ENCODE measurements at regions of chr1 and their contacts with region 1.

Region 1: GRCh38 chr1:94237291-94238226 is at the start of gene ARHGAP29:
- H3K4me3 ChIP-seq: peak within 1 kb of the TSS; percentile 92
- H3K27ac ChIP-seq: peak within 1 kb of the TSS; percentile 81
- H3K4me1 ChIP-seq: peaks cover 9% of the 10 kb centered on the region
- CTCF ChIP-seq: peak; percentile 80; the same call in 1 of the 2 replicates

Region 2: DNA sequence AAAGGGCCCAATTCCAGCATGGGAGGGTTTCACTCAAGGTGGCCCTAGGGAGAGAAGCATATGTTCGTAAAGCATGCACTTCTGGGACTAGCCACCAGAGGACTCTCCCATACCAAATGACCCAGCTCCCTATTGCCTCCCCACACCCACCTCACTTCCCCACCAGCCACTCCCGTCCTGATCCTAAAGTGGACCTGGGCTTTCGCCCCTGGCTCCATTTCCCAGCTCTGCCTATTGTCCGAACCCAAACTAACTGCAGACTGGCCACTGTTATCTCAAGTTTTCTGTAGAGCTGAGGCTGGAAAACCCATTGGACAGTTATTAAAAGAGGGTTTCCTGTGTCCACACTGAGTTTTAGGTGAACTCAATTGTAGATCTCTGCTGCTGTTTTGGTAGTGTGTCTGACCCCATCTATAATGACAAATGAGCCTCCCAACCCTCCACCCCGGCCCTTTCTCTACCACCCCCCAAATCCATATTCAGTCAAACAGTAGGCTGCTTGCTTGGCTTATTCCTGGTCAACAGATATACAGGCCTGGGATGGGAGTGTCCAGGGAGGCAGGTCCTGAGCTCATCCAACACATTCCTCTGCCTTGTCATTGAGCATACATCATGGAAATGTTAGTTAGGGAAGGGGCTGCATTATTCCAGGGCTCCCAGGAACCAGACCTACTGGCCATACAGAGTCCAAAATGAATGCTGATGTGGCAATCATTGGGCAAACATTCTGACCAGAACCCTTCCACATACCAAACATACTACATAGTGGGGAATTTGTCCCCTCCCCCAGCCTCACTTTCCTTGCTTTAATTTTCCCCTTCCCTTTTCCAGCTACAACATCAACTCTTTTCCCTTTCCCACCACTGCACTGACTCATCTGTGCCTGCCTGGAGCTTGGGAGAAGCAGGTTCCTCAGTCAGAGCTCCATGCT is 175.8 kb before region 1 on chr1:
- CTCF ChIA-PET with region 1: interaction called, 30 read pairs
- POLR2A ChIA-PET with region 1: interaction called, 9 read pairs
- H3K4me3 ChIP-seq: no peak overlapping the region
- H3K27ac ChIP-seq: no peak overlapping the region
- H3K4me1 ChIP-seq: no peaks in the 10 kb centered on the region
- CTCF ChIP-seq: peak; percentile 88

Region 3: GRCh38 chr1:94068999-94069918 is 168.3 kb before region 1 on chr1:
- CTCF ChIA-PET with region 1: interaction called, 30 read pairs
- POLR2A ChIA-PET with region 1: interaction called, 10 read pairs
- H3K4me3 ChIP-seq: no peak overlapping the region
- H3K27ac ChIP-seq: peak overlapping the region; percentile 37
- H3K4me1 ChIP-seq: peaks cover 17% of the 10 kb centered on the region
- CTCF ChIP-seq: no peak

Region 4: DNA sequence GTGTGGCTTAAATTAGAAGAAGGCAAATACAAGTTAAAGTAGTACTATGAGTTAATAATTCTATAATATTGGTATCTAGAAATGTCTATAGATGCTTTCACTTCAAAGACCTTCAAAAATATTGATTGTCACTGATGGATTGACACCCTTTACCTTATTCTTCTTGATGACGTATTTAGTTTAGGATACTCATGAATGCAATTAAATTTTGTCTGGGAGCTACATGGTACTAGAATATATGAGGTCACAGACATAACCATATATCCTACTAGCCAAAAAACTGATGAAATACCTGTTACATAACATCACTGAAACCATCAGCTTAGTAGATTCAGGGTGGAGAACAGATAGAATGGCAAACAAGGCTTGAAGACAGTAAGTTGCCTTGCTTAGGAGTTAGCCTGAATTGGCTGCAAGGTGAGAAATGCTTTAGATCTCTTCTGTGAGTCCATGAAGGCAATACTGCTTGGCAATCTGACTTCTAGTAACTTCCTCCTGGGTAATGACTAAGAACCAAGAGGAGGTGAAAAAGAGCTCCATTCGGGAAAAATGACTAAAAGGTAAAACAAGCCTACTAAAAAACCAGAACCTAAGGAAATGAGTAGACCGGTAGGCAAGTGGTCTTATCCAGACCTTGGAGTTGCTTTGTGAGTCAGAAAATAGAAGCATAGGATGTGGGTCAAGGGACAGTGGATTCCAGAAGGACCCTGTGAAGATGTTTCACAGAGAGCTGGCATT is 16.7 kb after region 1 on chr1:
- CTCF ChIA-PET with region 1: interaction called, 4 read pairs
- POLR2A ChIA-PET with region 1: interaction called, 32 read pairs
- H3K4me3 ChIP-seq: no peak overlapping the region
- H3K27ac ChIP-seq: no peak overlapping the region
- H3K4me1 ChIP-seq: no peaks in the 10 kb centered on the region
- CTCF ChIP-seq: no peak

Region 5: DNA sequence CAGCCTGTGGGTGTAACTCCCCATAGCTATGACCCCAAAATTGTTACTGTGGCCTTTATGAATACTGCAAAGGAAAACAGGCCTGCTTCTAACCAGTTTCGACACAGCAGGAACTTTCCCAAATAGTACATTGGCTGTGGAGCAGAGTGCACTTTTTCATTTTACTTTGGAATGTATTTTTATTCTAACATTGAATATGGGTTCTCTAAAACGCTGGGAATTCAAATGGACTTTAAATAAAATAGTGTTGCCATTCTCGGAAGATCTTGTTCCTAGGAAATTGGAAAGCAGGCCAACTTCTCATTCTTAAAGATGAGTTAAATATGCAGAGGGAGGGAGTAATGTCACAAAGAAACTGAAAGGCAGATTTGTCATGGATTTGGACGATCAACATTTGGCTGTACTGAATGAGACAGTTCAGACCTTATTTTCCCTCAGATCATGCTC is 39.5 kb after region 1 on chr1:
- CTCF ChIA-PET with region 1: no interaction called
- POLR2A ChIA-PET with region 1: no interaction called
- H3K4me3 ChIP-seq: no peak overlapping the region
- H3K27ac ChIP-seq: no peak overlapping the region
- H3K4me1 ChIP-seq: no peaks in the 10 kb centered on the region
- CTCF ChIP-seq: no peak

Region 6: GRCh38 chr1:94325379-94326302 is 88.1 kb after region 1 on chr1:
- CTCF ChIA-PET with region 1: interaction called, 4 read pairs
- POLR2A ChIA-PET with region 1: interaction called, 11 read pairs
- H3K4me3 ChIP-seq: no peak overlapping the region
- H3K27ac ChIP-seq: peak overlapping the region; percentile 68
- H3K4me1 ChIP-seq: peaks cover 31% of the 10 kb centered on the region
- CTCF ChIP-seq: no peak

Region 7: DNA sequence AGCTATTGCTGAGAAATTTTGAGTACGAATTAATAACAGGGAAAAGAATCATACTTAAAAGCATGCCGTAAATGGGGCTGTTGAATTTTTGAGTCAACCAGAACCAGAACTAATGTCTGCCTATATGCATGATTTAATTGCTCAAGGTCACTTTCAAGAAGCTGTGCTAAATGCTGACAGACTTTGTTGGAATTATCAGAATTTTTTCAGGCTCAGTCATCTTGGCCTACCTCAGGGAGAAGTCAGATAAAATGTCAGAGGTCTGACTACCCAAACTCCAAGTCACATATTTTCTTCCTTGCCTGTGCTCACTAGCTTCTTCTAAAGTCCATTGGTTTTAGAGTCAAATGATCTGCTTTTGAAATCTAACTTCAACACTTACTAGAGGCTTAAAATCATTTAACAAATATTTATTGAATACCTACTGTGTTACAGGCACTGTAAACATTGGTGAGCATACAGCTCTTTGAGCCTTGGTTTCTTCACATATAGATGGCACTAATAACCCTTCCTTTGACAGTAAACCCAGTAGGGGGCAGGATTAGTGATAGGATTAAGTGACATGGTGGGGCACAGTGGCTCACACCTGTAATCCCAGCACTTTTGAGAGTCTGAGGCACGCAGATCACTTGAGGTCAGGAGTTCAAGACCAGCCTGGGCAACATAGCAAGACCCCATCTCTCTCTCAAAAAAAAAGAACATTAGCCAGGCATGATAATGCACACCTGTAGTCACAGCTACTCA is 461.4 kb after region 1 on chr1:
- CTCF ChIA-PET with region 1: no interaction called
- POLR2A ChIA-PET with region 1: no interaction called
- H3K4me3 ChIP-seq: no peak overlapping the region
- H3K27ac ChIP-seq: no peak overlapping the region
- H3K4me1 ChIP-seq: no peaks in the 10 kb centered on the region
- CTCF ChIP-seq: no peak

Measured in HEK293 (cell line).